ENCODE measurements at regions of chr6 and their contacts with region 1.

Region 1: GRCh38 chr6:2988426-2989331 is 11.0 kb upstream of the NQO2 start:
- DNase-seq: peak; percentile 87
- ATAC-seq: peak; percentile 83
- H3K4me3 Mint-ChIP-seq: peak overlapping the region; percentile 93
- H3K27ac Mint-ChIP-seq: peak overlapping the region; percentile 99
- H3K4me1 Mint-ChIP-seq: peaks cover 21% of the 10 kb centered on the region
- H3K27me3 Mint-ChIP-seq: peaks cover under 1% of the 10 kb centered on the region
- CTCF ChIP-seq: no peak

Region 2: GRCh38 chr6:2765166-2765895 is 223.3 kb before region 1 on chr6 and contains the start of gene WRNIP1:
- CTCF ChIA-PET with region 1: interaction called, 3 read pairs
- POLR2A ChIA-PET with region 1: interaction called, 11 read pairs
- intact Hi-C with region 1: loop called (anchors 1 kb)
- DNase-seq: peak; percentile 92
- ATAC-seq: peak; percentile 89
- H3K4me3 Mint-ChIP-seq: peak within 1 kb of the TSS; percentile 93
- H3K27ac Mint-ChIP-seq: peak within 1 kb of the TSS; percentile 99
- H3K4me1 Mint-ChIP-seq: peaks cover 39% of the 10 kb centered on the region
- H3K27me3 Mint-ChIP-seq: no peaks in the 10 kb centered on the region
- CTCF ChIP-seq: no peak
- total RNA-seq, gene WRNIP1: 31.6 and 31.9 TPM in 2 replicates

Region 3: DNA sequence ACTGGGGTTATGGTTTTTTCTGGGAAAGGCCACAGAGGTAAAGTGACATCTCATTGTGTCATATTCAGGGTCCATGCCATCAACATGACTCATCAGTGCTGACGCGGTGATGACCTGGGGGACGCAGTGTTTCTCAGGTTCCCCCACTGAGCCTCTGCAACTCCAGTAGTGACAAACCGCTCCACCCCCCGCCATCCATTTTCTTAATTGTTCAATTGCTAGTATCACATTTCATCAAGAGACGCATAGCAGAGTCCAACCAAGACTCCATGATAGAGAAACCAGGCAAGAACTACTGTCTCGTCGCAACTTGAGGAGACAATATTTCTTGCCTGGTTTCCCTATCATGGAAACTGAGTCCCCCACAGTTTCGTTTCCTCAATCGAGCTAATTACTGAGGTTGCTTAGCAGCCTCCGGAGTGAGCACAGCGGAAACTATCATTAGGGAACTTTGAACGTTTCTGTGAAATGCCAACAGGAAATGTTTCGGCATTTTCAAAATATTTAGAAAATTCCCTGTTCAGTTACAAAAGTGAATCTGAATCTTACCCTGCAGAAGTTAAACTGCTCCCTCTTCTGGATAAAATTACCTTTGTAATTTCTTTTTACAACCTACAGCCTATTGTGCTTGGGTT is 134.8 kb before region 1 on chr6:
- CTCF ChIA-PET with region 1: interaction called, 7 read pairs
- POLR2A ChIA-PET with region 1: interaction called, 77 read pairs
- intact Hi-C with region 1: loop called (anchors 2 kb)
- DNase-seq: no peak
- ATAC-seq: peak; percentile 42
- H3K4me3 Mint-ChIP-seq: peak overlapping the region; percentile 74
- H3K27ac Mint-ChIP-seq: peak overlapping the region; percentile 97
- H3K4me1 Mint-ChIP-seq: peaks cover 81% of the 10 kb centered on the region
- H3K27me3 Mint-ChIP-seq: no peaks in the 10 kb centered on the region
- CTCF ChIP-seq: no peak

Region 4: DNA sequence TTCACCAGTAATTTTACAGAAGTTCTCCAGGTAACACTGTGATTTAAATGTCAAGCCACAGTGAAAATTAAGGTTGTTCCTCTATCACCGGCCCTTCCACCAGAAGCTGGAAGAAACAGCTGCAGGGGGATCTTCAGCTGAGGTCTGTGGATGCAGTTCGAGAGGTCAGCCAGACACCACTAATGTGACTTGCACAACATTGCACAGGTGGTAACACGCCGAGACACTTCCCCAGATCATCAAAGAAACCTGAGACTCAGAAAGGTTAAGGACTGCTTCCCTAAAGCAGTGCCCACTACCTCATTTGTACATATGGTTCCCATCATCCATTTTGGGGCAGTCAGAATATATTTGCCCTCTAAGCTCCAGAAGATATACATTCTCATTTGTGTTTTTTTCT is 77.5 kb before region 1 on chr6:
- CTCF ChIA-PET with region 1: interaction called, 10 read pairs
- POLR2A ChIA-PET with region 1: interaction called, 8 read pairs
- intact Hi-C with region 1: loop called (anchors 1 kb)
- DNase-seq: no peak
- ATAC-seq: peak; percentile 80
- H3K4me3 Mint-ChIP-seq: peak overlapping the region; percentile 51
- H3K27ac Mint-ChIP-seq: peak overlapping the region; percentile 88
- H3K4me1 Mint-ChIP-seq: peaks cover 43% of the 10 kb centered on the region
- H3K27me3 Mint-ChIP-seq: no peaks in the 10 kb centered on the region
- CTCF ChIP-seq: no peak

Region 5: DNA sequence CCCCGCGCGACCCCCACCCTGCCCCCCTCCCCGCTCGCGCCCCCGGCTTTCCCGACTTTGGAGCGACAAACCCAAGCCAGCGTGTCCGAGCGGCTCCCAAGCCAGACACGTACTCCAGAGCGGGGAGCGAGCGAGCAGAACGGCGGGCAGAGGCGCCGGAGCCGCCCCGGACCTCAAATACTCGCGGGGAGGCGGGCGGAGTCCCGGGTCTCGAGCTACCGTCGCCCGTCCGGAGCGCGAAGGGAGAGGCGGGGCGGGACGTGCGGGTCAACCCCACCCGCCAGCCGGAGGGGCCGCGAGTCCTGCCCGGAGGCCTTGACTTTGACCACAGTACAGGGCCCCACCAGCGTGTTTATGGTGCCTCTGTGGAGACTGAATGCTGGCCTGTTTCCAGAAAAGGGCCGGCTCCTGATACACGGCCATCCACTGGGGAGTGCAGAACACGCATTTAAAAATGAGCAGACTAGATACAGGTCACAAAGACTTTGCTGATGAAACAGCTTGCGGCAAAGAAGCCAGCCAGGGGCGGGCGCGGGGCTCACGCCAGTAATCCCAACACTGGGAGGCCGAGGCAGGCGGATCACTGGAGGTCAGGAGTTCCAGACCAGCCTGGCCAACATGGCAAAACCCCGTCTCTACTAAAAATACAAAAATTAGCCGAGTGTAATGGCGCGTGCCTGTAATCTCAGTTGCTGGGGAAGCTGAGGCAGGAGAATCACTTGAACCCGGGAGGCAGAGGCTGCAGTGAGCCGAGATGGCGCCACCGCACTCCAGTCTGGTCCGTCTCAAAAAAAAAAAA is 17.1 kb before region 1 on chr6 and contains the start of gene SERPINB6:
- CTCF ChIA-PET with region 1: interaction called, 4 read pairs
- POLR2A ChIA-PET with region 1: interaction called, 23 read pairs
- intact Hi-C with region 1: loop called (anchors 1 kb)
- DNase-seq: peak; percentile 60
- ATAC-seq: peak; percentile 72
- H3K4me3 Mint-ChIP-seq: peak within 1 kb of the TSS; percentile 88
- H3K27ac Mint-ChIP-seq: peak within 1 kb of the TSS; percentile 85
- H3K4me1 Mint-ChIP-seq: peaks cover 40% of the 10 kb centered on the region
- H3K27me3 Mint-ChIP-seq: peaks cover 1% of the 10 kb centered on the region
- CTCF ChIP-seq: no peak
- total RNA-seq, gene SERPINB6: 51.7 and 56.1 TPM in 2 replicates

Region 6: DNA sequence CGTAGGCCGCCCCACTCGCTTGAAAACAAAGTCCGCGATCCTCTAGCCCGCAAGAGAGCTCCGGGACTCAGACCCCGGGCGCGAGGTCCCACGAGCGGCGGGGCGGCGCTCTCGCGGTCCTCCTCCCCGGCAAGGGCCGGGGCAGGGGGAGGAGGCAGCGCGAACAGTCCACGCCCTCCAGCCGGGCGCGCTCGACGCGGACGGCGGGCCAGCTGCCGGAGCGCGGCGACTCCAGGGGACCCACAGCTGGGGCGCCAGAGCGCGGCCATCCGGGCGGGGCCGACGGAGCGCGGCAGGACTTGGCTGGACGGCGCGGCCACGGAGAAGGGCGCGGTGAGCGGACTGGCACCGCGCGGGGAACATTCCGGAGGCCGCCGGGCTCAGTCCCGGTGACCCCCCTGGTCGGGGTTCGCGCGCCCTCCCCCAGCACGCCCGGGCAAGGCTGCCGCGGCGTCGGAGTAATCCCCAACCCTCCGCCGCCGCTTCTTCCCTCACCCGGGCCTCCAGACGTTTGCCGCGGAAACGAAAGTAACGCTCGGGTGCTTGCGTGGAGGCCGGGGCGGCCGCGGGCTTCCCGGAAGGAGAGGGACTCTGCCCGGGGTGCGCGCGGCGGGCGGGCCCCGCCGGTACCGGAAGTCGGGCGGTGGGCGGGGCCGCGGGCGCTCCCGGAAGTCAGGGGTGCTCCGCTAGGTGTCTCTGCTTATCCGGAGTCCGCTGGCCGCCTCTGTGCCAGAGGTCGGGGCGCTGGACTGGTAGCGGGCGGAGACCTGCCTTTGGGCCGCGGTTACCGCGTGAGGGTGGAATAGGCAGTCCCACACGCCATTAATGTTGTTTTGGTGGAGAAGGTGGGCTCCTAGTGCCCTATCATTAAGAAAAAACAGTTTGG is 79.9 kb after region 1 on chr6 and contains the start of gene RIPK1:
- CTCF ChIA-PET with region 1: interaction called, 8 read pairs
- POLR2A ChIA-PET with region 1: interaction called, 30 read pairs
- intact Hi-C with region 1: no loop called
- DNase-seq: peak; percentile 98
- ATAC-seq: peak; percentile 74
- H3K4me3 Mint-ChIP-seq: peak within 1 kb of the TSS; percentile 93
- H3K27ac Mint-ChIP-seq: peak within 1 kb of the TSS; percentile 94
- H3K4me1 Mint-ChIP-seq: peaks cover 38% of the 10 kb centered on the region
- H3K27me3 Mint-ChIP-seq: no peaks in the 10 kb centered on the region
- CTCF ChIP-seq: no peak
- total RNA-seq, gene RIPK1: 20.5 and 21.8 TPM in 2 replicates